GM10248 (cell line): ENCODE measurements at regions of chr1 and their contacts with region 1.

Region 1: DNA sequence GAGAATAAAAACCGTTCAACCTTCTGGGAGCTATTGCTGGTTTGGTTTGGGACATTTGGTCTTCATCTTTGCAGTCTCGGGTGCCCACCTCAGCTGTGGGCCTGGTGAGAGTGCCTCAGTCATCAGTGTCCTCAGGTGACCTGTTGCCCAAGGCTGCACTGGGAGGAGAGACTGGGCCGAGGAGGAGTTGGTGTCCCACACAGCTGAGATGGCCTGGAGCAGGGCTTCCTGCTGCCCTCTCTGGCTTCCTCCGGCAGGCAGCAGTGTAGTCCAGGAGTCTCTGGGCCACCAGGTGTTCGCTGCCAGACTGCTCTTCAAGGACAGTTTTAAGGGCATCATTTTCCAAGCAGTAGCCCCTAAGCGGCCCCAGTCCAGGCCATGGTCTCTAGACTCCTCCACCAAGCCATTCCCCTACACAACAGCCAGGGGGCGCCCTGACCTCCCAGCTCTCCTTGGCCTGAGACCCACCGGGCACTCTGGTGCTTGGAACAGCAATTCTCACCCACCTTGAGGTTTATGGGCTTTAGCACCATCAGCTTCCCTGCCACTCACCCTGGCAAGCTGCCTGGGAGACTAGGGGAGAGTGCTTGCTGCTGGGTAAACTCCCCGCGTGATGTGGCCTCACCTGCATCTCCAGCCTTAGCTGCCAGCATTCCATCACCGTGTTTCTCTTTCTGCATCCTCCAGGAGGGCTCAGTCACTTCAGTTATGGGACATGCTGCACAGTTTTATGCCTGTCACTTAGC is 9.1 kb upstream of the SYTL1 start:
- DNase-seq: peak; percentile 77
- CTCF ChIP-seq: peak; percentile 81

Region 2: DNA sequence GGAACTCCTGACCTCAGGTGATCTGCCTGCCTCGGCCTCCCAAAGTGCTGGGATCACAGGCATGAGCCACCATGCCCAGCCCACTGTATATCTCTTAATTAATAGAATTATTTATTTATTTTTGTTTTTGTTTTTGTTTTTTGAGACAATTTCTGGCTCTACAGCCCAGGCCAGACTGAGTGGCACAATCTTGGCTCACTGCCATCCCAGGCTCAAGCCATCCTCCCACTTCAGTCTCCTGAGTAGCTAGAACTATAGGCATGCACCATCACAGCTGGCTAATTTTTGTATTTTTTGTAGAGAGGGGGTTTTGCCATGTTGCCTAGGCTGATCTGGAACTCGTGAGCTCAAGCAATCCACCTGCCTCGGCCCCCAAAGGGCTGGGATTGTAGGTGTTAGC is 114.0 kb before region 1 on chr1:
- CTCF ChIA-PET with region 1: no interaction called
- POLR2A ChIA-PET with region 1: no interaction called
- DNase-seq: no peak
- CTCF ChIP-seq: no peak

Region 3: DNA sequence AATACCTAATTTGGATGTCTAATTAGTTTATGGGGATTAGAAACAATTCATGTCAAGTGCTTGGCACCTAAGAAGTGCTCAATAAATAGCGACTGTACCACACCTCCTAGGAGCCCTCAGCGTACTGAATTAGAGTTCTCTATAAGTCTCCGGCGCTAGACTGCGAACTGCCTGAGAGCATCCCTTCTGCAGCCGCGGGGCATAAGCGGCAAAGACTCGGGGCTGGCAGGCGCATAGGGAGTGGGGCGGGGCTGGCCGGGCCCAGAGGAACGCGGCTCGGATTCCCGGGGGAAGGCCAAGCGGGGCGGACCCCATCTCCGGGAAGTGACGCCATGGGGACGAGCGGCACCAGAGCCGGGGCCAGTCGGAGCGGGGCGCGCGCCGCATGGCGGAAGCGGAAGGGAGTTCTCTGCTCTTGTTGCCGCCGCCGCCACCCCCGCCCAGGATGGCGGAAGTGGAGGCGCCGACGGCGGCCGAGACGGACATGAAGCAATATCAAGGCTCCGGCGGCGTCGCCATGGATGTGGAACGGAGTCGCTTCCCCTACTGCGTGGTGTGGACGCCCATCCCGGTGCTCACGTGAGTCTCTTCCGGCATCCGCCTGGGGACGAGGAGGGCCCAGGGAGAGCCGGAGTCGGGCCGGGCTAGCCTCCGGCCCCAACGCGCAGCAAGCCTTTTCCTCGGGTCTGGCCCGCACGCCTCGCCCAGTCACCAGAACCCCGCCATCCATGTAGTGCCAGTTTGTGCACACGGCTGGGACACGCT is 10.7 kb before region 1 on chr1 and contains the start of gene TMEM222:
- CTCF ChIA-PET with region 1: interaction called, 40 read pairs
- POLR2A ChIA-PET with region 1: no interaction called
- DNase-seq: peak; percentile 99
- CTCF ChIP-seq: no peak

Region 4: DNA sequence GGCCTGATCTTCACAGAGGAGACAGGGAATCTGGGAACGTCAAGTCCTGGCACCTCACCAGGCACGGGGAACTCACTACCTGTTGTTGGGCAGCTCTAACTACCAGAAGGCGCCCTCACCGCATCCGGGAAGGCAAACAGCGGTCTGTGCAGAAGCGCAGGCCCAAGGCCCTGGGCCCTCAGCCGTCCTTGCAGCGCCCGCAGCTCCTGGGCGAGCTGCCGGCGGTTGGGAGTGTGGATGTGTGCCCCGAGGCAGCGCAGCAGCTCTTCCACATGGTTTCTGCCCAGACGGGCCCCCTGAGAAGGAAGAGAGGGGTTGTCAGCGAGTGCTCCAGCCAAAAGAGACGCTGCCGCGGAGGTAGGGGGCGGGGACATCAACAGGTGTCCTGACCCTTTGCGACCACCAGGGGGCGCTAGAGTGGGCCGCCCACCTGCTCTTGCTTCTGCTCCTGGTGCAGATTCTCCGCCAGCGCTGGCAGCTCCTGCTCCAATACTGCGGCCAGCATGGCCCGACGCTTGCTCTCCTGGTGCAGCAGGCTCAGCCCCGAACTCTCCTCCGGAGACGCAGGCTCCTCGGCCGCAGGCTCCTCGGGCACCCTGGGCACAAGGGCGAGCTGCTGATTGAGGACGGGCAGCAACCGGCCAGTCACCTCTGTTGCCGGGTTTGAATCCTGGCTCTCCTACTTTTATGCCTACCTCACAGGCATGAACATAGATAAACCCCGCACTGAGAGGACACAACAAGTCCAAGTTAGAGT is 24.8 kb after region 1 on chr1:
- CTCF ChIA-PET with region 1: interaction called, 70 read pairs
- POLR2A ChIA-PET with region 1: interaction called, 4 read pairs
- DNase-seq: peak; percentile 93
- CTCF ChIP-seq: peak; percentile 97

Region 5: DNA sequence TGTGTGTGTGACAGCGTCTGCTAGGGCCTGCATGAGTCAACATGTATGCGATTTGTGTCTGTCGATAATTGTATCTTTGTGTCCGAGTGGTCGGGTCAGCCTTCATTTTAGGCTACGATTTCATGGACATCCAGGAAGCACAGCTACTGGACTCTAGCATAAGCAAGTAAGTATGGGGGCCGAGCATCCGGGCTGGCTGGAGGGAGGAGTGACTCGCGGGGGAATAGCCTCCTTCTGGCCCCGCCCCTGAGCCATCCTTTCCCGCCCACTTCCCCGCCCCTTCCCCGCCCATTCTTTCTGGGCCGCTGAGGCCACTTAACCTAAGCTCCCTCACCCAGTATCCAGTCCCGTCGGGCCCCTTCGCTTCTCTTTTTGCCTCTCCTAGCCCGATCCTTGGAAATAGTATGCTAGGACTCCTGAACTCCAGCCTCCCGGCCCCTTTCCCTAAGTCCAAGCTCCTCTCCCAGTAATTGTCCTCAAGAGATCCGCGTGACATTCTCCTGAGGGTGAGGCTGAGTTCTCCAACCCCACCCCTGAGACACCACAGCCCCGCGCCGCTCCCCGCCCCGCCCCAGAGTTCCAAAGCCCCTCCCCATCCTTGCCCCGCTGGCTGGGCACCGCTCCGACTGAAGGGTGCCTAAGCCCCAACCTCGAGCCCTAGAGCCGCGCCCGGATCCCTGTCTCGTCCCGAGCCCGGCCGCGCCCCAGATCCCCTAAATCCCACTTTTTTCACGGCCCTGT is 32.8 kb after region 1 on chr1:
- CTCF ChIA-PET with region 1: interaction called, 17 read pairs
- POLR2A ChIA-PET with region 1: no interaction called
- DNase-seq: peak; percentile 94
- CTCF ChIP-seq: no peak

Region 6: DNA sequence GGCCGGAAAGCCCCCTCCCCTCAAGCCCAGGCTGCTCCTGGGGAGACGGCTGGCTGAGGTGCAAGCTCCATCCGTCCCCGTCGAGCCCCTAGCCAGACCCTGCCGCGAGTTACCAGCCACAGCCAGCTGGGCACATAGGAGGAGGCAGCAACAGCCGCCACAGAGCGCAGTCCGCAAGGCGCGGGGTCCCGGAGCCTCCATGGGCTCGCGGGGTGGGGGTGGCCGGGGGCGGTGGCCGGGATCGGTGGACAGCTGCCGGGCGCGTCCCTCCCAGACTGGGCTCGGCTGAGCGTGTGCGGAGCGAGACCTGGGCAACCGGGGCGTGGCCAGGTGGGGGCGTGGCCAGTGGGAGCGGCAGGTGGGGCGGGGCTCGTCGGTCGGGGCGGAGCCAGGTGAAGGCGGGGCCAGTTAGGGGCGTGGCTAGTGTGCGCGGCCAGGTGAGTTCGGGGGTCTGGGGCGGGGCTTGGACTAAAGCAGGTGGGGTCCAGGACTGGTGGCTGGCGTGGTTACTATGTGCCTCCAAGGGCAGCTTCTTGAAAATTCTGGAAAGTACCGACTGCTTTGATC is 50.4 kb after region 1 on chr1 and contains the start of gene CD164L2:
- CTCF ChIA-PET with region 1: interaction called, 27 read pairs
- POLR2A ChIA-PET with region 1: no interaction called
- DNase-seq: no peak
- CTCF ChIP-seq: no peak

Region 7: GRCh38 chr1:27428316-27429028 is 95.8 kb after region 1 on chr1:
- CTCF ChIA-PET with region 1: no interaction called
- POLR2A ChIA-PET with region 1: no interaction called
- DNase-seq: no peak
- CTCF ChIP-seq: no peak